Tibial artery (tissue), 4 donors: ENCODE measurements at regions of chr6 and their contacts with region 1.

Region 1: GRCh38 chr6:28474441-28475219 is 31.3 kb upstream of the ZSCAN23 start:
- DNase-seq: no peak
- H3K4me3 ChIP-seq: no peak overlapping the region
- H3K27ac ChIP-seq: no peak overlapping the region
- H3K4me1 ChIP-seq: no peaks in the 10 kb centered on the region
- H3K27me3 ChIP-seq: peaks cover 0 to 12% of the 10 kb centered on the region in 2 donors
- CTCF ChIP-seq: no peak

Region 2: DNA sequence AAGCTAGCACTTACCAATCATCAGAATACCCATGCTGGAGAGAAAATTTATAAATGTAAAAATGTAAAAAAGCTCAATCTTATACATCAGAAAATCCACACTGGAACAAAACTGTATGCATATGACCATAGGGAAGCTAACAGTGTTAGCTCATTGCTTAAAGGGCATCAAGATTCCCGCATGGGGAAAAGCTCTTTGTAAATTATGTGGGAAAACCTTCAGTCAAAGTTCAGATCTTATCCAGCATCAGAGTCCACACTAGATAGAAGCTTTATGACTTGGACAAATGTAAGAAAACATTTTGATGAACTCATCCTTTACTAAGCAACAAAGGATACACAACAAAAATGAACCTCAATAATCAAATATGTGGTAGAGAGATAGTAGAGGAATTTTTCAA is 298.3 kb before region 1 on chr6:
- intact Hi-C with region 1: loop called (anchors 5 kb)
- DNase-seq: no peak
- H3K4me3 ChIP-seq: no peak overlapping the region
- H3K27ac ChIP-seq: no peak overlapping the region
- H3K4me1 ChIP-seq: no peaks in the 10 kb centered on the region
- H3K27me3 ChIP-seq: peaks cover 0 to 2% of the 10 kb centered on the region in 2 donors
- CTCF ChIP-seq: no peak

Region 3: DNA sequence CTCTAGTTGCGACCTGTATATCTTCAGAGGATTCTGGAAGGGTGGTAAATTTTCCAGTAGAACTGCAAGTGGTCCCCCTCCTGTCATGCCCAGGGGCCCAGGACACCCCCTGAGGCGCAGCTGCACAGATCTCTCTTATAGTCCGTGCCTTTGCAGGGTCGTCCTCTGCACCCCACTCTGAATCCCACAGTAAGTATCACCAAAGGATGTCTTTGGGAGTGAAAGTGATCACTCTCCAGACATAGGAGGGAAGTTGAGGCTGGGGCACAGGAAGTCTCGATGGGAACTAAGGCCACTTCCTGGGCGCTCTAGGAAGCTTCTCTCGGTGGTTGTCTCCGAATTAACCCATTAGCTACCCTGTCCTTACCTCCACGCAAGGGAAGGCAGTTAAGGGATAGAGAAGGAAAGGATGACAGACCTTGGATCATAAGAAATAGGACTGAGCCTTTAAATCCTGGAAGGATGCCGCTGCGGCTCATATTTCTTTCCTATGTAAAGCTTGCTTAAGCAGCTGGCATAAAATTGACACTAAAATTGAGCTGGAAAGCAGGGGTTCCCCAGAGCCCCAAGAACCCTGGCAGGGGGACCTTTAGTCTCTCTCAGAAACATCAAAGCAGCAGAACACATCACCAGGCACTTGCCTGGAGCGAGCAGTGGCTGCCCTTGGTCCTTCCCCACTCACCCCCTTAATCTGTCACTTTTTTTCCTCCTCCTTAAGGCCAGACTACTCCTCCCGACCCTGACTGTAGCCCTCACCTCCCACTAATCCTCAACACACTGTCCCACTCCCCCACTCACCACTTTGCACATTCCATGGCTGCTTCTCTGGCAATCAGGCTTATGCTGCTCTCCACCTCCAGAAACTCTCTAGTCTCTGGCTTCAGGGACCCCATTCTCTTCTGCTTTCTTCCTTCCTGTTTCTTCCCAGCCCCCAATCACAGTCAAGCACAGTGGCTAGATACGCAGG is 222.3 kb before region 1 on chr6 and contains the start of gene ZKSCAN4:
- intact Hi-C with region 1: no loop called
- DNase-seq: peak; percentile 74 to 78
- H3K4me3 ChIP-seq: peak within 1 kb of the TSS; percentile 74 to 89
- H3K27ac ChIP-seq: peak within 1 kb of the TSS; percentile 59 to 60
- H3K4me1 ChIP-seq: peaks cover 0 to 24% (median 16%) of the 10 kb centered on the region in 4 donors
- H3K27me3 ChIP-seq: no peaks in the 10 kb centered on the region
- CTCF ChIP-seq: no peak

Region 4: GRCh38 chr6:28633445-28634215 is 159.0 kb after region 1 on chr6:
- intact Hi-C with region 1: no loop called
- DNase-seq: no peak
- H3K4me3 ChIP-seq: no peak overlapping the region
- H3K27ac ChIP-seq: no peak overlapping the region
- H3K4me1 ChIP-seq: peaks cover 0 to 11% (median 3%) of the 10 kb centered on the region in 4 donors
- H3K27me3 ChIP-seq: peaks cover 0 to 38% of the 10 kb centered on the region in 2 donors
- CTCF ChIP-seq: no peak